Prostate gland (tissue), 2 donors: ENCODE measurements at regions of chr12 and their contacts with region 1.

Region 1: DNA sequence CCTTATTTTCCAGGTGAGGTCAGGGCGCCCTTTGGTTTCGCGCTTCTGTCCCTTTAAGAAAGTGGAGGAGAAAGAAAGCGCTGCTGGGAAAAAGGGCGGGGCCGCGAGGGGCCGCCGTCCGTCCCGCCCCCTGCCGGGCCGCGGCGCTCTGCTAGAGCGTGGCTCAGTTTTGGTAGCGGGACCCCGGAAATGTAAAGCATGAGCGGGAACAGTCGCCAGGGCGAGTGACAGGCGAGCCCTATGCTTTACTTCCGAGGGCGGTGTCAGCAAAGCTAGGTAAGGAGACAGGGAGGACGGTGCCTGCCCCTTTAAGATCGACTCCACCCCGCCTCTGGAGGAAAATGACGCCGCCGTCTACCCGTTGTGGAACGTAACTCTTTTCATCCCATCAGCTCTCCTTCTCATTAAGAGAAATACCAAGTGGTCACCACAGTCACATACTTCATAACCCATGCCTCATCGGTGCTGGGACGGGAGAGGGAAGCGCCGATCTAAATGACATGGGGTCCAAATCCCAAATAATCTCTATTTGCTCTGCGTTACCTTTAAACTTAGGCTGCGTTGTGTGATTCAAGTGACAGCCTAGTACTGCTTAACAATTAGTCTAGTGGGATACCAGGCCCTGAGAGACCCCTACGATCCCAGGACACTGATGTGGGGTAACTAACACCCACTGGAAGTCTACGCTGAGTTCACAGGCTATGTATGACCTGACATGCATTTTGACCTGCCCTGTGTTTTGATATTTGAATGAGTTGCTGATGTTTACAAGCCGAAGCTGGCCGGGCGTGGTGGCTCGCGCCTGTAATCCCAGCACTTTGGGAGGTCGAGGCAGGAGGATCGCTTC is at the start of gene ETFBKMT:
- DNase-seq: peak; percentile 89
- H3K4me3 ChIP-seq: peak within 1 kb of the TSS; percentile 49 to 67
- H3K27ac ChIP-seq: peak within 1 kb of the TSS; percentile 95 to 96
- H3K4me1 ChIP-seq: no peaks in the 10 kb centered on the region
- H3K27me3 ChIP-seq: no peaks in the 10 kb centered on the region
- CTCF ChIP-seq: peak; percentile 58 to 87 (median 73)
- POLR2A ChIP-seq: peak; percentile 47
- total RNA-seq, gene ETFBKMT: 3.6 to 7.0 TPM

Region 2: GRCh38 chr12:31728917-31729640 is 69.8 kb after region 1 on chr12 and contains the start of gene AMN1:
- intact Hi-C with region 1: loop called (anchors 5 kb)
- DNase-seq: peak; percentile 99
- H3K4me3 ChIP-seq: peak within 1 kb of the TSS; percentile 51 to 61
- H3K27ac ChIP-seq: peak within 1 kb of the TSS; percentile 92 to 96
- H3K4me1 ChIP-seq: no peaks in the 10 kb centered on the region
- H3K27me3 ChIP-seq: no peaks in the 10 kb centered on the region
- CTCF ChIP-seq: peak in 2 of 4 experiments; percentile 35 to 47
- POLR2A ChIP-seq: peak; percentile 82
- total RNA-seq, gene AMN1: 11.9 to 31.9 TPM

Region 3: GRCh38 chr12:31959161-31959700 is 299.9 kb after region 1 on chr12 and contains the start of gene RESF1:
- intact Hi-C with region 1: loop called (anchors 2 kb)
- DNase-seq: peak; percentile 87
- H3K4me3 ChIP-seq: peak within 1 kb of the TSS; percentile 70 to 76
- H3K27ac ChIP-seq: peak within 1 kb of the TSS; percentile 91
- H3K4me1 ChIP-seq: no peaks in the 10 kb centered on the region
- H3K27me3 ChIP-seq: no peaks in the 10 kb centered on the region
- CTCF ChIP-seq: no peak
- POLR2A ChIP-seq: peak; percentile 85
- total RNA-seq, gene RESF1: 27.6 to 97.7 TPM

Region 4: GRCh38 chr12:32089586-32089985 is 430.3 kb after region 1 on chr12:
- intact Hi-C with region 1: no loop called
- DNase-seq: no peak
- H3K4me3 ChIP-seq: no peak overlapping the region
- H3K27ac ChIP-seq: no peak overlapping the region
- H3K4me1 ChIP-seq: no peaks in the 10 kb centered on the region
- H3K27me3 ChIP-seq: no peaks in the 10 kb centered on the region
- CTCF ChIP-seq: no peak
- POLR2A ChIP-seq: no peak

Region 5: GRCh38 chr12:32312049-32312670 is 652.9 kb after region 1 on chr12:
- intact Hi-C with region 1: loop called (anchors 5 kb)
- DNase-seq: peak; percentile 5
- H3K4me3 ChIP-seq: no peak overlapping the region
- H3K27ac ChIP-seq: no peak overlapping the region
- H3K4me1 ChIP-seq: no peaks in the 10 kb centered on the region
- H3K27me3 ChIP-seq: no peaks in the 10 kb centered on the region
- CTCF ChIP-seq: peak in 3 of 4 experiments; percentile 55 to 65 (median 60)
- POLR2A ChIP-seq: no peak

Region 6: DNA sequence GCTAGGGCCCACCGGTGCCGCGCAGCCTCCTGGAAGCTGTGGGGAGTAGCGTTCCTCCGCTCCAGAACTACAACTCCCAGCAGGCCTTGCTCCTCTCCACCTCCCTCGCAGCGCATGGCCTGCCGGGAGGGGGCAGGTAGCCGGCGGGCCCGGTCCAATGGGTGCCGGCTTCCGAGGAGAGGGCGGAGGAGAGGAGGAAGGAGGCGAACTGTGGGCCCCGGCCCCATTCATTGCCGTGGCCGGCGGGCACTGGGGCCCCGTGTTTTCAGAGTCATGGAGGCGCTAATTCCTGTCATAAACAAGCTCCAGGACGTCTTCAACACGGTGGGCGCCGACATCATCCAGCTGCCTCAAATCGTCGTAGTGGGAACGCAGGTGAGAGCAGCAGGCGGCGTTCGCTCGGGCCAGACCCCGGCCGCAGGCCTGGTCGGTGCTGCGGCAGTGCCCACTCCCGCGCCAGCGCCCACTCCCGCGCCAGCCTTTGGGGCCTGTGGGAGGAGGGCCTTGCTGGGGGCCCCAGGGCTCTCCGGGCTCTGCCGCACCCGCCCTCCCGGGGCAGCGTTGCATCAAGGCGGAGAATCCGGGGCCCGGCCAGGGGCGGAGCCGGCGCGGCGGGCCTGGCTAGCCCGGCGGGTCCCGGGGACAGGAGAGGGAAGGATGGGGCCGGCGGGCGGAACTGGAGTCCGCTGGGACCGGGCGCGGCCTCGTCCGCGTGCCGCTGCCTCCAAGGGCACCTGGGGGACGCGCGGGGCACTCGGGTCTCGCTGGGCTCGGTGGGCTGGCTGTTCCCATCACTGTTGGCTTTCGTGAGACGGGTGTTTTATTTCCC is 1020.0 kb after region 1 on chr12 and contains the start of gene DNM1L:
- intact Hi-C with region 1: loop called (anchors 10 kb)
- DNase-seq: peak; percentile 92
- H3K4me3 ChIP-seq: peak within 1 kb of the TSS; percentile 62 to 75
- H3K27ac ChIP-seq: peak within 1 kb of the TSS; percentile 88 to 91
- H3K4me1 ChIP-seq: peaks cover 5% of the 10 kb centered on the region
- H3K27me3 ChIP-seq: no peaks in the 10 kb centered on the region
- CTCF ChIP-seq: peak in 2 of 4 experiments; percentile 39 to 62
- POLR2A ChIP-seq: peak; percentile 89
- total RNA-seq, gene DNM1L: 37.3 to 47.5 TPM